ENCODE measurements at regions of chr21 and their contacts with region 1.

Region 1: GRCh38 chr21:15752763-15753407 is 23.1 kb downstream of the USP25 start:
- DNase-seq: no peak
- H3K4me3 ChIP-seq: no peak overlapping the region
- H3K27me3 ChIP-seq: no peaks in the 10 kb centered on the region
- CTCF ChIP-seq: no peak

Region 2: DNA sequence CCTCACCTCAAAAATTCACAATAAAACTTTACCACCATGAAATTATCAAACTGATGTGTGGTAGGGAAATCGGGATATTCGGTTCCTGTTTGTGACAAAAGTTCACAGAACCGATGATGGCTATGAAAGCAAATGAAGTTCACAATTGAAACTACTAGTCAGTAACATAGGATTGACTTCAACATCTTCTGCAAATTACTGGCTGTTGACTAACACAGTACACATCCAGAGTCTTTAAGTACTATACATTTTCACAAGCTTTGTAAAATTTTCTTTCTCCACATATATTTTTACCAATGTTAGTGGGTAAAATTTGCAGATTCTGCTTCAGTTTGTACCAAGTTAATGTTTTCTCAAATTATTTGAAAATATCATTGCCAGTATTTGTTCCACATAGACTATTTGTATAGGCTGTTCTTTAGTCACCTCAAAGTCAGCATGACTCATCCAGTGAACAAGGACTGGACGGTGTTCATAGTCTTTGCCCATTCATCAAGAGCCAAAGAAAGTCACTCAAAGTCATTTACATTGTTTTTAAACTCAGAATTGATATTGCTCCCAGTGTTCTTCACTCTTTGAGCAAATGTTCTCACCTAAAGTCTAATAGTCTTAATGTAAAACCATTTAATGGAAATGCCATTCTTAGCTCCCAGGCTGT is 190.3 kb after region 1 on chr21:
- CTCF ChIA-PET with region 1: no interaction called
- POLR2A ChIA-PET with region 1: interaction called, 12 read pairs
- DNase-seq: no peak
- H3K4me3 ChIP-seq: no peak overlapping the region
- H3K27me3 ChIP-seq: no peaks in the 10 kb centered on the region
- CTCF ChIP-seq: no peak